H1 (cell line): ENCODE measurements at regions of chr15 and their contacts with region 1.

Region 1: GRCh38 chr15:77659350-77660321 is 26.9 kb upstream of the LINGO1 start:
- DNase-seq: peak in 1 of 2 experiments; percentile 76
- H3K4me3 ChIP-seq: no peak overlapping the region
- H3K27ac ChIP-seq: no peak overlapping the region
- H3K4me1 ChIP-seq: peaks cover 0 to 16% (median 10%) of the 10 kb centered on the region in 4 experiments; a peak in 5 of 7 replicates
- H3K27me3 ChIP-seq: no peaks in the 10 kb centered on the region
- CTCF ChIP-seq: peak; percentile 53 to 66 (median 55); a peak in 3 of 4 replicates
- EP300 ChIP-seq: no peak
- POLR2A ChIP-seq: no peak
- RAD21 ChIP-seq: peak; percentile 55 to 64

Region 2: GRCh38 chr15:77507911-77508310 is 151.7 kb before region 1 on chr15:
- CTCF ChIA-PET with region 1: no interaction called
- POLR2A ChIA-PET with region 1: no interaction called
- DNase-seq: no peak
- H3K4me3 ChIP-seq: no peak overlapping the region
- H3K27ac ChIP-seq: no peak overlapping the region
- H3K4me1 ChIP-seq: peaks cover 16 to 32% (median 27%) of the 10 kb centered on the region in 4 experiments
- H3K27me3 ChIP-seq: no peaks in the 10 kb centered on the region
- CTCF ChIP-seq: no peak
- EP300 ChIP-seq: no peak
- POLR2A ChIP-seq: no peak
- RAD21 ChIP-seq: no peak

Region 3: GRCh38 chr15:77617476-77618230 is 42.0 kb before region 1 on chr15:
- CTCF ChIA-PET with region 1: interaction called, 25 read pairs
- POLR2A ChIA-PET with region 1: no interaction called
- DNase-seq: no peak
- H3K4me3 ChIP-seq: no peak overlapping the region
- H3K27ac ChIP-seq: no peak overlapping the region
- H3K4me1 ChIP-seq: peaks cover 0 to 30% (median 18%) of the 10 kb centered on the region in 4 experiments; a peak in 6 of 7 replicates
- H3K27me3 ChIP-seq: no peaks in the 10 kb centered on the region
- CTCF ChIP-seq: peak in 2 of 3 experiments; percentile 71 to 84; a peak in 3 of 4 replicates
- EP300 ChIP-seq: no peak
- POLR2A ChIP-seq: no peak
- RAD21 ChIP-seq: peak; percentile 47 to 58; a peak in 3 of 4 replicates

Region 4: GRCh38 chr15:77671363-77671986 is 11.8 kb after region 1 on chr15:
- CTCF ChIA-PET with region 1: interaction called, 20 read pairs
- POLR2A ChIA-PET with region 1: interaction called, 3 read pairs
- DNase-seq: no peak
- H3K4me3 ChIP-seq: no peak overlapping the region
- H3K27ac ChIP-seq: no peak overlapping the region
- H3K4me1 ChIP-seq: no peaks in the 10 kb centered on the region; a peak in 2 of 7 replicates
- H3K27me3 ChIP-seq: no peaks in the 10 kb centered on the region
- CTCF ChIP-seq: no peak
- EP300 ChIP-seq: no peak
- POLR2A ChIP-seq: no peak
- RAD21 ChIP-seq: no peak

Region 5: GRCh38 chr15:77709135-77709886 is 49.7 kb after region 1 on chr15:
- CTCF ChIA-PET with region 1: interaction called, 12 read pairs
- POLR2A ChIA-PET with region 1: no interaction called
- DNase-seq: no peak
- H3K4me3 ChIP-seq: no peak overlapping the region
- H3K27ac ChIP-seq: no peak overlapping the region
- H3K4me1 ChIP-seq: peaks cover 0 to 10% (median 2%) of the 10 kb centered on the region in 4 experiments; a peak in 3 of 7 replicates
- H3K27me3 ChIP-seq: no peaks in the 10 kb centered on the region
- CTCF ChIP-seq: peak in 2 of 3 experiments; percentile 20 to 26; a peak in 1 of 4 replicates
- EP300 ChIP-seq: no peak
- POLR2A ChIP-seq: no peak
- RAD21 ChIP-seq: peak; percentile 10 to 29; a peak in 3 of 4 replicates

Region 6: GRCh38 chr15:77775837-77776236 is 116.2 kb after region 1 on chr15:
- CTCF ChIA-PET with region 1: interaction called, 10 read pairs
- POLR2A ChIA-PET with region 1: interaction called, 3 read pairs
- DNase-seq: no peak
- H3K4me3 ChIP-seq: no peak overlapping the region
- H3K27ac ChIP-seq: no peak overlapping the region
- H3K4me1 ChIP-seq: peaks cover 0 to 3% (median 0%) of the 10 kb centered on the region in 4 experiments; a peak in 1 of 7 replicates
- H3K27me3 ChIP-seq: no peaks in the 10 kb centered on the region
- CTCF ChIP-seq: no peak
- EP300 ChIP-seq: no peak
- POLR2A ChIP-seq: no peak
- RAD21 ChIP-seq: no peak